AG04450 (cell line): ENCODE measurements at regions of chr9 and their contacts with region 1.

Region 1: DNA sequence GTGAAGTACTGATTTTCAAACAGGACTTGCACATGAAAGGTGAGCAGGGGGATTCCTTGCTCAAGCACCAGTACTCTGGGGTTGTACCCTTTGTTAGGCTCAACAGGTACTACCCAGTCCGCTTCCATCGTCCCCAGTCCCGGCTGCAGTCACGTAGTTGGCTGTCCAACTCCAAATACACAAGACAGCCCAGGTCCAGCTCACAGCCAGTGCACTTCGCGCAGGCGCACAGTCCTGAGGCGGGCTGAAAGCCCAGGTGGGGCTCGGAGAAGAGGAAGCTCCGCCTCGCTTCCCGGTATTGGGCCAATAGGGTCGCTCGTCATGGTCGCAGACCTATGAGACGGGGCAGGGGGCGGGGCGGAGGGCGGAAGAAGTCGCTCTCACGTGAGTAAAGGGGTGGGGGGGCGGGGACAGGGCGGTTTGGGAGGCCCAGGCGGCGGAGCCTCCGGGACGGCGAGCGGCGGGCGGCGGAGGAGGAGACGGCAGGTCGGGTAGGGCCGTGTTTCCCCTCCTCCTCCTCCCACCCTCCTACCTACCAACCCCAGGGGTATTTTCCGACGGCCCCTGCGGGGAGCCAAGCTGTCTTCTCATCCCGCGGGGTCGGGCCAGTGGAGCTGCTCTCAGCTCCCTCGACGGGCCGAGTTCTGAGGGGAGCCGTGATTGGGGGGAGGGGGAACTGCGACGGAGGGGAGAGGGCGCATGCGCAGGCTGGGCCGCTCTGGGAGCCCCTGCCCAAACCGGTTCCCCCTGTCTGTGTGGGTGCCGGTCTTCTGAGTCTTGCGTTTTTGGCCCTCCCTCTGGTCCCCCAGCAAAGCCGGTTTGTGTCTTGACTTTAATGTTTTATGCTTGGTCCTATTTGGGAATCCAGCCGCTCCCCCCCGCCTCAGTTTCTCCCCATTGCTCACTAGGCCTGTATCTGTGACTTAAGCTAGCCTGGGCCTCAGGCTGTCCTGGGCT is at the start of gene RABGAP1:
- DNase-seq: peak; percentile 95
- H3K4me3 ChIP-seq: peak within 1 kb of the TSS; percentile 90
- H3K27ac ChIP-seq: peak within 1 kb of the TSS; percentile 86
- H3K27me3 ChIP-seq: no peaks in the 10 kb centered on the region
- CTCF ChIP-seq: no peak
- polyA plus RNA-seq, gene RABGAP1: 56.4 and 69.4 TPM in 2 replicates

Region 2: DNA sequence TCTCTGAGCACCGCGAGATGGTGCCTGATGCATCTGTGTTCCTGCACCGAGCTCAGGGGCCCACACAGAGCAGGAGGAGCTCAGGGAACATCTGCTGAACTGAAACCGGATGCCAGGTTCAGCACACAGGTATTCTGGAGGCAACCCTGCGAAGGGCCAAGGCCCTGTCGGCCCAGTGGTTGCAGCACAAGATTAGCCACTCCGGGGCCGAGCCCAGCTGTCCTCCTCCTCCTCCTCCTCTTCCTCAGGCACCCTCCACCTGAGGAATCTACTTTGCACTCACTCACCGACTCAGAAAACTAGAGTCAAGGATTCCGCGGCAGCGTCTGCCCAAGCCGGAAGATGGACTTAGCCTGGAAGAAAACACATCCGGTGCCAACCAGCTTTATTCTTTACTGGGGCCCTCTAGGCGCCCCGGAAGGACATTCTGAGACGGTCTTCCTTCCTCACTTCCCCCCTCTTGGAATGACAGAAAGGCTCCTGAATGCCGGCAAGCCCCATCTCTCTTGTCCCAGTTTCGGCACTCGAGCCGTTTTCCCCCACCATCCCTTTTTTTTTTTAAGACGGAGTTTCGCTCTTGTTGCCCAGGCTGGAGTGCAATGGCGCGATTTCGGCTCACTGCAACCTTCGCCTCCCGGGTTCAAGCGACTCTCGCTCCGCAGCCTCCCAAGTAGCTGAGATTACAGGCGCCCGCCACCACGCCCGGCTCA is 27.8 kb before region 1 on chr9 and contains the start of gene ZBTB6:
- CTCF ChIA-PET with region 1: no interaction called
- POLR2A ChIA-PET with region 1: interaction called, 12 read pairs
- DNase-seq: peak; percentile 51
- H3K4me3 ChIP-seq: peak within 1 kb of the TSS; percentile 92
- H3K27ac ChIP-seq: peak within 1 kb of the TSS; percentile 89
- H3K27me3 ChIP-seq: no peaks in the 10 kb centered on the region
- CTCF ChIP-seq: no peak
- polyA plus RNA-seq, gene ZBTB6: 5.9 and 8.3 TPM in 2 replicates

Region 3: GRCh38 chr9:122954253-122954691 is 13.4 kb after region 1 on chr9:
- CTCF ChIA-PET with region 1: no interaction called
- POLR2A ChIA-PET with region 1: interaction called, 11 read pairs
- DNase-seq: no peak
- H3K4me3 ChIP-seq: no peak overlapping the region
- H3K27ac ChIP-seq: no peak overlapping the region
- H3K27me3 ChIP-seq: no peaks in the 10 kb centered on the region
- CTCF ChIP-seq: no peak